Mucosa of descending colon (tissue), 3 donors: ENCODE measurements at regions of chr3 and their contacts with region 1.

Region 1: GRCh38 chr3:25801786-25802185 is 11.9 kb downstream of the OXSM start:
- DNase-seq: no peak
- ATAC-seq: no peak
- H3K4me3 ChIP-seq: no peak overlapping the region
- H3K4me1 ChIP-seq: no peaks in the 10 kb centered on the region
- CTCF ChIP-seq: no peak

Region 2: DNA sequence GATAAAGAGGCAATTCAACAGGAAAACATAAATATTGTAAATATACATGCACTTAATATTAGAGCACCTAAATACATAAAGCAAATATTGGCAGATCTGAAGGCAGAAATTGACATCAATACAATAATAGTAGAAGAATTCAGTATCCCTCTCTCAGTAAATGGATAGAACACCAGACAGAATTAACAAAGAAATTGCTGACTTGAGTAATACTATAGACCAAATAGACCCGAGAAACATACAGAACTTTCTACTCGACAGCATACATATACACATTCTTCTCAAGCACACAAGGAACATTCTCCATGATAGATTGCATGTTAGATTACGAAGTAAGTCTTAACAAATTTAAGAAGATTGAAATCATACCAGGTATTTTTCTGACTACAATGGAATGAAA is 38.3 kb after region 1 on chr3:
- intact Hi-C with region 1: loop called in 1 of 2 experiments (anchors 2 kb)
- DNase-seq: no peak
- ATAC-seq: no peak
- H3K4me3 ChIP-seq: no peak overlapping the region
- H3K4me1 ChIP-seq: no peaks in the 10 kb centered on the region
- CTCF ChIP-seq: no peak

Region 3: DNA sequence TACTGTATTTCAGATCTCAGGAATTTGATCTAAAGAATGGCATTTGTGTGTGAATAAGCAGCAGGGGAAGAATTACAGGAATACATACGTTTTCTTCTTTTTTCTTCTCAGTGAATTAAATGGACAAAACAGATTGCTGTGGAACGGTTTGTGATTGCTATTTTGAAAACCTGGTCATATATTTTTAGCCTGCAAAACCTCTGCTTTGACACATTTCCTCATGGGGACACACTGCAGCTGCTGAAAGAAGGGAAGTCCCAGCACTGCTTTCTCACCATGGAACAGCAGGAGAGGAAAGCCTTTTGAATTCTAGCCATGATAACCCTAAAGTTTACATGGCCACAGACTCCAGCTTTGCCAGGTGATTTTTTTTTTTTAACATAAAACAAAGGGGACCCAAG is 303.1 kb after region 1 on chr3:
- intact Hi-C with region 1: no loop called
- DNase-seq: no peak
- ATAC-seq: no peak
- H3K4me3 ChIP-seq: no peak overlapping the region
- H3K4me1 ChIP-seq: no peaks in the 10 kb centered on the region
- CTCF ChIP-seq: no peak